Activated CD4-positive, alpha-beta memory T cell treated with anti-CD3 and anti-CD28 coated beads, Interleukin-2, amount 10 ng/mL, durations not matched to agents 7 days and 5 days (primary cell): ENCODE measurements at regions of chr11 and their contacts with region 1.

Region 1: DNA sequence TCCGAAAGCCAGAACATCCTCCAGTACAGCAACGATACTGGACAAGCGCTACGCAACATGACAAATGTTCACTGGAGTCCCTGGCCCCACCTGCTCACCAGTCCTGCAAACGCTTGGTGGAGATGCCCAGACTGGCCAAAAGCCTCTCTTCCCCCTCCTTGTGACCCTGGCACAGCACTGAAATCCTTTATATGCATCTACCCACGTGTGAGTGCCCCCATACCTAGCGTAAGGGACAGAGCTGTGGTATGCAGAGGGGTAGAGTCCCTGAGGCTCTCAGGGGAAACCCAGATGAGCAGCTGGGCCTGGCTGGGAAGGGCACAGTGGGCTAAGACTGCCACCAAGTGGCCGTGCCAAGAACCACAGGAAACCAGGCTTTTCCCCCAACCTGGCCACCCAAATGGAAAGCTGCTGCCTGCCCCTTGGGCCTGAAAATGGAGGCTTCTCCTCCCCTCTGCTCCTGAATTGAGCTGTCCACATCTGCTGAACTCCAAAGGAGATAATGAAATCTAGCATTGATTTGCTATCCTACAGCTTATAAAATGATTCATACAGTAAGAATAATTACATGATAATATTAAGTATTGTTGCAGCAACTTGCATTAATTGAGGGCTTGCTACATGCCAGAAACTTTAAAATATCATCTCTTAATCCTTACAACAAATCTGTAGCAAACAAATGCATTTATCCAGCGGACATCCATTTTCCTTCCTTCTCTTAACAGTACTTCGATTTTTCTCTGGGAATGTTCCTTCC is 24.8 kb upstream of the TTC12 start:
- DNase-seq: peak; percentile 70
- H3K4me3 Mint-ChIP-seq: no peak overlapping the region
- H3K27ac Mint-ChIP-seq: no peak overlapping the region
- H3K4me1 Mint-ChIP-seq: no peaks in the 10 kb centered on the region
- H3K27me3 Mint-ChIP-seq: peaks cover 3% of the 10 kb centered on the region

Region 2: DNA sequence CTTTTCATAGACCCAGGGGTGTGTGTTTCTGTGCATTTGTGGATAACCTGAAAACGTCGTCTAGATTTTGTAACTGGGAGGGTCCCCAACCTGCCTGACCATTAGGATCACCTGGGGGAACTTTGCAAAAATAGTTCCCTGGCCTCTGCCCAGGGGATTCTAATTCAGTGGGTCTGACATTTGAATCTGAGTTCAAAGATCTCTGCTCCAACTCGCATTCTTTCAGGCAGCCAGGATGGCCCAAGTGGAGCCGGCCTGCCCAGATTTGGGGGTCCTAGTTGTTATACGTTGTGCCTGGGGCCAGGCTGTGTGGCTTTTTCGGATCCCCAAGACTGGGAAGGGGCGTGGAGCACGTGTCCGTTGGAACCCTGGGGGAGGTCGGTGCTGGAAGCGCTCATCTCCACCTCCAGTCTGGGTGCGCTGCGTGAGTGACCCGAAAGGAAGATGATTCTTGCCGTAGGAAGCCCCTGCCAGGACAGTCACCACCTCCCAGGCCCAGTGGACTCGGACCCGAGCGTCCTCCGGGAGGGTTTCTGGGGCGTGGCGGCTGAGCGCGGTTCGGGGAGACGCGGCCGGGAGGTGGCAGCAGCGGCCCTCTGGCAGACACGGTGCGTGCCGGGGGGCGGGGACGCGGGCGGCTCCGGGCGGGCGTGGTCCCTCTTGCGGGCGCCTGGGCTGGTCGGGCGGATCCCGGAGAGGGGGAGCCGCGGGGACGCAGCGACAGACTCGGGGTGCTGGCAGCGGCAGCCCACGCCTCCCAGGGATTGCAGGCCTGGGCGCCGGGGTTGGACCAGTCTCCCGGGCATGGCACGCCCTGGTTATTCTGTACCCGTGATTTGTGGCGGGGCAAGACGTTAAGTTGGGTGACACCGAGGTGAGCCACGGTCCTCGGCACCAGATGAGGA is 999.8 kb before region 1 on chr11:
- CTCF ChIA-PET with region 1: interaction called, 15 read pairs
- POLR2A ChIA-PET with region 1: no interaction called
- DNase-seq: peak; percentile 89
- H3K4me3 Mint-ChIP-seq: peak overlapping the region; percentile 74
- H3K27ac Mint-ChIP-seq: peak overlapping the region; percentile 50
- H3K4me1 Mint-ChIP-seq: peaks cover 41% of the 10 kb centered on the region
- H3K27me3 Mint-ChIP-seq: peaks cover 8% of the 10 kb centered on the region

Region 3: GRCh38 chr11:112588252-112588694 is 701.3 kb before region 1 on chr11:
- CTCF ChIA-PET with region 1: interaction called, 39 read pairs
- POLR2A ChIA-PET with region 1: no interaction called
- DNase-seq: peak; percentile 45
- H3K4me3 Mint-ChIP-seq: no peak overlapping the region
- H3K27ac Mint-ChIP-seq: no peak overlapping the region
- H3K4me1 Mint-ChIP-seq: peaks cover 5% of the 10 kb centered on the region
- H3K27me3 Mint-ChIP-seq: peaks cover 3% of the 10 kb centered on the region

Region 4: DNA sequence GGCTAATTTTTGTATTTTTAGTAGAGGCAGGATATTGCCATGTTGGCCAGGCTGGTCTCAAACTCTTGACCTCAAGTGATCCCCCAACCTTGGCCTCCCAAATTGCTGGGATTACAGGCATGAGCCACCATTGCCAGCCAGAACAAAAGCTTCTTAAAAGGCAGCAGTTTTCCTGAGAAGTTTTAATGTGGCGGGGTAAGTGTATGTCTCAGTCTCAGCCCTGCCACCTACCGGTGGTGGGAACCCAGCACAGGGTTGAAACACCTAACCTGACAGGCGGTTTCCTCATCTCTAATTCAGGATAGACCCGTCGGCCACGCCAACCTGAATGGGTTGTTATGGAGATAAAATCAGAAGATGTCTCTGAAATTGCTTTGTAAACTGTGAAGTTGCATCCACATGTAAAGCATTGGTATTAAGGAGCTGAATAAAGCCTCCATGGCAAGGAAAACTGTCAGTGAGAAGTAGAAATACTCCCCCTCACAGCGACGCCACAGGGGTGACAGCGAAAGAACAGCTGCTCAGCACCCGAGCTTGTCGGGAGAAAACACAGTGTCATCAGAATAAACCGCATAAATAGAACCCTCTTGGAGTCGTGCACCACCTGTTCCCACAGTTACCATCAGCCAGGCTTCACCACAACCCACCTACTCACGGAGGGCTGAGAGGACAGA is 494.3 kb before region 1 on chr11:
- CTCF ChIA-PET with region 1: interaction called, 23 read pairs
- POLR2A ChIA-PET with region 1: no interaction called
- DNase-seq: peak; percentile 47
- H3K4me3 Mint-ChIP-seq: no peak overlapping the region
- H3K27ac Mint-ChIP-seq: no peak overlapping the region
- H3K4me1 Mint-ChIP-seq: peaks cover 1% of the 10 kb centered on the region
- H3K27me3 Mint-ChIP-seq: no peaks in the 10 kb centered on the region

Region 5: DNA sequence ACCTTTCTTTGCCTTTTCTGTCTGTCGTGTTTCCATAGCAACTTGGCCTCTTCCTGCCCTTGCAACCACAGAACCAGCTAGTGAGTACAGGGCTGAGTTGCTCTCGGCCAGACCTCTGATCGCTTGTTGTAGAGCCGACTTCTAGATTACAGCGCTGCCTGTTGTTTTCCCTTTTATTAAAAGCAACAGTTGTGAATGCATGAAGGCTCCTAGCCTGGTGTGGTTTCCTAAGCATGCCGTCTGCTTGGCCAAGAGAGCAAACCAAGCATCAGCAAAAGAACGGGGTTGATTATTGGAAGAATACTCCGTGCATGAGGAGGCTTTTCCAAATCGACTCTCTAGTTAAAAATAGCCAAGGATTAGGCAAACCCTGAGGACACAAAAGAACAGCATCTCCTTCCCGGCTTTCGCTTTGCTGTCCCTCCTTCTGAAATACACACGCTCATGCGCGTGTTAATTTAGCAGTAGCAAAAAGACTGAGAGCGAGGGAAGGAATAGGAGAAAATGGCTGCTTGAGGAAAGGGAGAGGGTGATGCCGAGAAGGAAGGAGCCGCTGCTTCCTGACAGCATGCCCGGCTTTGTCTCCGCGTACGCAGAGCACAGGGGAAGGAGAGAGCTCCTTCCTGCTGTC is 46.7 kb before region 1 on chr11:
- CTCF ChIA-PET with region 1: no interaction called
- POLR2A ChIA-PET with region 1: no interaction called
- DNase-seq: peak; percentile 60
- H3K4me3 Mint-ChIP-seq: peak overlapping the region; percentile 18
- H3K27ac Mint-ChIP-seq: no peak overlapping the region
- H3K4me1 Mint-ChIP-seq: peaks cover 12% of the 10 kb centered on the region
- H3K27me3 Mint-ChIP-seq: peaks cover 45% of the 10 kb centered on the region